Sigmoid colon (tissue), 7 donors: ENCODE measurements at regions of chr11 and their contacts with region 1.

Region 1: GRCh38 chr11:128453444-128454336 is 133.7 kb downstream of the ETS1 start:
- DNase-seq: peak; percentile 91
- H3K4me3 ChIP-seq: no peak overlapping the region
- H3K27ac ChIP-seq: peak overlapping the region in 3 of 4 donors; percentile 41 to 56 (median 43)
- H3K4me1 ChIP-seq: peaks cover 0 to 28% (median 21%) of the 10 kb centered on the region in 4 donors
- H3K27me3 ChIP-seq: no peaks in the 10 kb centered on the region
- CTCF ChIP-seq: no peak
- EP300 ChIP-seq: peak in 2 of 4 donors; percentile 61 to 72
- POLR2A ChIP-seq: no peak

Region 2: GRCh38 chr11:128405714-128406662 is 47.7 kb before region 1 on chr11:
- intact Hi-C with region 1: loop called (anchors 5 kb)
- DNase-seq: no peak
- H3K4me3 ChIP-seq: no peak overlapping the region
- H3K27ac ChIP-seq: peak overlapping the region in 3 of 4 donors; percentile 41 to 61 (median 56)
- H3K4me1 ChIP-seq: peaks cover 0 to 30% (median 27%) of the 10 kb centered on the region in 4 donors
- H3K27me3 ChIP-seq: no peaks in the 10 kb centered on the region
- CTCF ChIP-seq: no peak
- EP300 ChIP-seq: no peak
- POLR2A ChIP-seq: no peak